B cell (primary cell): ENCODE measurements at regions of chr5 and their contacts with region 1.

Region 1: DNA sequence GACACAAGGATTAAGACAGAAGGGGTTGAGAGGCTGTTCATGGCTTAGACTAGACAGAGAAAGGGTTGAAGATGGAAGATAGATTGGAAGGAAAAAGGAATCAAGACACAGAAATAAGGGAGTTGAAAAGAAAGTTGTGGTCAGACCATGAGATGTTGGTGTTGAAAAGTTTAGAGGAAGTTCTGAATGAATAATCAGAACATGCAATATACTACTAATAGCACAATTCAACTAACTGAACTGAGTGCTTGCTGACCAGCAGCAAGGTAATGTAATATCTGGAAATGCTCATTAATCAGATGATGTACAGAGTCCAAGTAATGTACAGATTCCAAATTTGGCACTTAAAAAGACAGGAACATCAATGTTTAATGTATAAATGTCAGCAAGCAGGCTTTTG is 10.6 kb upstream of the NNT start:
- DNase-seq: no peak
- ATAC-seq: no peak
- H3K4me3 ChIP-seq: no peak overlapping the region
- H3K4me3 Mint-ChIP-seq: no peak overlapping the region
- H3K27ac ChIP-seq: no peak overlapping the region
- H3K27ac Mint-ChIP-seq: no peak overlapping the region
- H3K4me1 ChIP-seq: no peaks in the 10 kb centered on the region
- H3K4me1 Mint-ChIP-seq: no peaks in the 10 kb centered on the region
- H3K27me3 ChIP-seq: no peaks in the 10 kb centered on the region
- H3K27me3 Mint-ChIP-seq: no peaks in the 10 kb centered on the region
- CTCF ChIP-seq: no peak

Region 2: GRCh38 chr5:43491324-43491723 is 101.0 kb before region 1 on chr5:
- CTCF ChIA-PET with region 1: no interaction called
- POLR2A ChIA-PET with region 1: interaction called, 11 read pairs
- intact Hi-C with region 1: no loop called
- DNase-seq: no peak
- ATAC-seq: no peak
- H3K4me3 ChIP-seq: no peak overlapping the region
- H3K4me3 Mint-ChIP-seq: no peak overlapping the region
- H3K27ac ChIP-seq: no peak overlapping the region
- H3K27ac Mint-ChIP-seq: no peak overlapping the region
- H3K4me1 ChIP-seq: no peaks in the 10 kb centered on the region
- H3K4me1 Mint-ChIP-seq: no peaks in the 10 kb centered on the region
- H3K27me3 ChIP-seq: no peaks in the 10 kb centered on the region
- H3K27me3 Mint-ChIP-seq: no peaks in the 10 kb centered on the region
- CTCF ChIP-seq: no peak

Region 3: GRCh38 chr5:43563321-43563720 is 29.0 kb before region 1 on chr5:
- CTCF ChIA-PET with region 1: no interaction called
- POLR2A ChIA-PET with region 1: no interaction called
- intact Hi-C with region 1: no loop called
- DNase-seq: no peak
- ATAC-seq: no peak
- H3K4me3 ChIP-seq: no peak overlapping the region
- H3K4me3 Mint-ChIP-seq: no peak overlapping the region
- H3K27ac ChIP-seq: no peak overlapping the region
- H3K27ac Mint-ChIP-seq: no peak overlapping the region
- H3K4me1 ChIP-seq: no peaks in the 10 kb centered on the region
- H3K4me1 Mint-ChIP-seq: no peaks in the 10 kb centered on the region
- H3K27me3 ChIP-seq: no peaks in the 10 kb centered on the region
- H3K27me3 Mint-ChIP-seq: no peaks in the 10 kb centered on the region
- CTCF ChIP-seq: no peak

Region 4: GRCh38 chr5:43729846-43730478 is 137.6 kb after region 1 on chr5:
- CTCF ChIA-PET with region 1: no interaction called
- POLR2A ChIA-PET with region 1: no interaction called
- intact Hi-C with region 1: no loop called
- DNase-seq: no peak
- ATAC-seq: no peak
- H3K4me3 ChIP-seq: no peak overlapping the region
- H3K4me3 Mint-ChIP-seq: no peak overlapping the region
- H3K27ac ChIP-seq: no peak overlapping the region
- H3K27ac Mint-ChIP-seq: no peak overlapping the region
- H3K4me1 ChIP-seq: no peaks in the 10 kb centered on the region
- H3K4me1 Mint-ChIP-seq: no peaks in the 10 kb centered on the region
- H3K27me3 ChIP-seq: no peaks in the 10 kb centered on the region
- H3K27me3 Mint-ChIP-seq: peaks cover 6% of the 10 kb centered on the region
- CTCF ChIP-seq: peak; percentile 67